ENCODE measurements at regions of chr2 and their contacts with region 1.

Region 1: DNA sequence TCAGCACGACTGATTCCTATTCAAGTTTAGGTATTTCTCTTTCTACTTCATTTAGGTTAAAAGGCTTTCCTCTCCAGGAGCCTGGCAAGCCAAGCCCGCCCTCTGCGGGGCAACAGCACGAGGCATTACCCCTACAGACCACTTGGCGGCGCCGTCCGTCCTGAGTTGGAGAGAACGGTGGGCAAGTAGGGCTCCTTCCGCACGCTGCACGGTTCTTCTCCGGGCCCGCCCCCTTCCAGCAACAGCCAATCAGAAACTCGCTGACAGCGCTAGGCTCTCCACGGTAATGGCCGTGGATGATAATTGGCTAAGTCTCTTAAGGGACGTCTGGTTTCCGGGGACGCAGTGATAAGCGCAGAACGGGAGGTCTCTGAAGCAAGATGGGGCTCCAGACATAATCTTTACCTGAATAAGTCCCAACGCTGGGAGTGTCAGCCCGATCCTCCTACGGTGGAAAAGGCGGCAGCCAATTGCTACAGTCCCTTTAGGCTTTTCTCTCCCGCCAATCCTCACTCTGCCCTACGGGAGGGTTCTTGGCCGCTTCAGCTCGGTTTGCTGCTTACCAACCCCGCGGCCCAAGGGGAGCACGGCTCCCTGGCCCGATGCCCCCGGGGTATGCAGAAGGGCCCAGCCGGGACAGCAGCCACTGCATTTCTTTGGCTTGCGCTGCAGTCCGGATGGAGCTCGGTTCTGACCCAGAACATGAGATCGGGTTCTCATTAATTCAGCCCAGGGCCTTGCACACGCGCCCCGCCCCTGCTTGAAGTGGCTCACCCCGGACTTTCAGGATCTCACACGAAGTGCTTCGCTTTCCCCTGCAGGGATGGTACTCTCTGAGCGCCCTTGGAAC is 206.9 kb upstream of the PKDCC start:
- DNase-seq: peak; percentile 94
- CTCF ChIP-seq: peak; percentile 99

Region 2: GRCh38 chr2:41853427-41854216 is 12.7 kb after region 1 on chr2:
- CTCF ChIA-PET with region 1: interaction called, 39 read pairs
- POLR2A ChIA-PET with region 1: no interaction called
- DNase-seq: no peak
- CTCF ChIP-seq: peak; percentile 59

Measured in GM10248 (cell line).